Activated CD4-positive, alpha-beta memory T cell treated with anti-CD3 and anti-CD28 coated beads, Interleukin-2, amount 10 ng/mL, durations not matched to agents 7 days and 5 days (primary cell): ENCODE measurements at regions of chr4 and their contacts with region 1.

Region 1: DNA sequence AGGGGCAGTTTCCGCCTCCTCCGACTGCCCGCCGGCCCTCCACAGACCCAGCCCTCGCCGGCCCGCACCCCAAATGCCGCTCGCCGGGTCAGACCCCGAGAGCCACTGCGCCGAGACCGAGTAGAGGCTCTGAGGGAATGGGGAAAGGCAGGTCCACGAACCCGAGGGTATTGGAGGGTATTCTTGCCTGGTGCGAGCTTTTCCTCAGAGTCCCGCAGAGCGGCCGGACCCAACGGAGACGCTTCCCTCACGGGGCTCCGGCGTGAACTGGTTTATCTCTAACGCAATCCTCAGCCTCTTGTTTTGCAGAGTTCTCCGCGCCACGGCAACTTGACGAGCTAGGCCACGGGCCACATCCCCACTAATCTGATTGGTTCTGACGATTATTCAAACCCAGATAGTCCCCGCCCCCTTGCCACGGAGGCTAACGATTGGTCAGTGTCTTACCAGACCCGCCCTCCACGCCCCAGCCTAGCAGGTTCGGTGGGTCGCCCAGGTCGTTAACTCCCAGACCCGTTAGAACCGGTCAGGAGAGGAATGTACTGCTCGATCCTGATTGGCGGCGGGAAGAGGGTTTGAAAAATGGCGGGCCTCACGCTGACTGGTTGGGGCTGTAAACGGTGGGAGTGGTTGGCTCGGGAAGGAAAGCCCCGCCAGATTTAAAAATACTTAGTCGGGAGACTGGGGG is at the start of gene HMGB2:
- DNase-seq: peak; percentile 100
- H3K4me3 Mint-ChIP-seq: peak within 1 kb of the TSS; percentile 94
- H3K27ac Mint-ChIP-seq: peak within 1 kb of the TSS; percentile 98
- H3K4me1 Mint-ChIP-seq: peaks cover 40% of the 10 kb centered on the region
- H3K27me3 Mint-ChIP-seq: no peaks in the 10 kb centered on the region
- total RNA-seq, gene HMGB2: 776 to 794 TPM

Region 2: GRCh38 chr4:173168396-173169177 is 165.6 kb before region 1 on chr4 and contains the start of gene GALNT7:
- CTCF ChIA-PET with region 1: no interaction called
- POLR2A ChIA-PET with region 1: interaction called, 43 read pairs
- DNase-seq: peak; percentile 67
- H3K4me3 Mint-ChIP-seq: peak within 1 kb of the TSS; percentile 94
- H3K27ac Mint-ChIP-seq: peak within 1 kb of the TSS; percentile 84
- H3K4me1 Mint-ChIP-seq: peaks cover 30% of the 10 kb centered on the region
- H3K27me3 Mint-ChIP-seq: no peaks in the 10 kb centered on the region
- total RNA-seq, gene GALNT7: 16.0 to 19.1 TPM

Region 3: DNA sequence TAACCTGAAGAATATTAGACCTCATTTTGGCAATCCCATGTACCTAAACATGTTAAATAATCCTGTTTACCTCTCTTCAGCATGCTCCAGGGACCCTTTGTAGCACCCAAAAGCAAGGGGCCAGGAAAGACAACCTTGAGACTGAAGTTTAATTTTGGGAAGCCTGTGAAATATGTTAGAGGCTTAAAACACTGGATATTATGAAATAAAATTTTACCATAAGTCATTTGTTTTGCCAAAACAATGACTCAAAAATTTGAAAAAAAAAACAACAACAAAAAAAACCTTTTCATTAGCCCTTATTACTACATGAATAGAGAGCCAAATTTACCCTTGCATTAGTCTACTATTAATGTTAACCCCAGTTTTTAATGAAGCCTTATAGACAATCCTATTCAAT is 49.8 kb before region 1 on chr4:
- CTCF ChIA-PET with region 1: no interaction called
- POLR2A ChIA-PET with region 1: no interaction called
- DNase-seq: no peak
- H3K4me3 Mint-ChIP-seq: no peak overlapping the region
- H3K27ac Mint-ChIP-seq: no peak overlapping the region
- H3K4me1 Mint-ChIP-seq: peaks cover 13% of the 10 kb centered on the region
- H3K27me3 Mint-ChIP-seq: no peaks in the 10 kb centered on the region

Region 4: DNA sequence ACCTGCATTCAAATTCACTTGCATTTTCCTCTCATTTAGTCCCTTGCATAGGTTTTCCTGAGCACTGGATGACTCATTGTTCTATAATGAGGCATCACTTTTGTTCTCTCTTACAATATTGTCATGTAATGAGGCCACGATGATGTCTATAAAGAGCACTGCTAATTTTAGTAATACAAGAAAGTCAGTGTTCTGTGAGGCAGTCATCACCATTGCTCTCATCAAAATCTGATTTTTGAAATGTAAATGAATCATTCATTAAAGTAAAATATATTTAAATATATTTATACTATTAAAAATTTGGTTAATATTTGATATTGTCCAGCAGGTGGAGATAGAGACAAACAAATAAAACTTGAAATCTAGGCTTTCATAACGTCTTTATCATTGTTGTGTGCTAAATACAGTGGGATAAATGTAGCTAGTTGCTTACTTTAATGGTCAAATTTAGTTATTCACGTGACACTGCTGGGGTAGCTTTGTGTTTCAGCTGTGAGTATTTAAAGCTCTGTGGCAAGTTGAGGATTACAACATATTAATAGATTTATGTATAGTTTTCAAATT is 15.5 kb before region 1 on chr4:
- CTCF ChIA-PET with region 1: interaction called, 5 read pairs
- POLR2A ChIA-PET with region 1: interaction called, 70 read pairs
- DNase-seq: no peak
- H3K4me3 Mint-ChIP-seq: no peak overlapping the region
- H3K27ac Mint-ChIP-seq: no peak overlapping the region
- H3K4me1 Mint-ChIP-seq: peaks cover 8% of the 10 kb centered on the region
- H3K27me3 Mint-ChIP-seq: no peaks in the 10 kb centered on the region

Region 5: GRCh38 chr4:173346074-173346473 is 11.8 kb after region 1 on chr4:
- CTCF ChIA-PET with region 1: interaction called, 12 read pairs
- POLR2A ChIA-PET with region 1: interaction called, 46 read pairs
- DNase-seq: no peak
- H3K4me3 Mint-ChIP-seq: no peak overlapping the region
- H3K27ac Mint-ChIP-seq: no peak overlapping the region
- H3K4me1 Mint-ChIP-seq: no peaks in the 10 kb centered on the region
- H3K27me3 Mint-ChIP-seq: peaks cover 16% of the 10 kb centered on the region

Region 6: GRCh38 chr4:173360587-173361221 is 26.5 kb after region 1 on chr4:
- CTCF ChIA-PET with region 1: no interaction called
- POLR2A ChIA-PET with region 1: interaction called, 28 read pairs
- DNase-seq: no peak
- H3K4me3 Mint-ChIP-seq: no peak overlapping the region
- H3K27ac Mint-ChIP-seq: no peak overlapping the region
- H3K4me1 Mint-ChIP-seq: peaks cover 11% of the 10 kb centered on the region
- H3K27me3 Mint-ChIP-seq: peaks cover 3% of the 10 kb centered on the region

Region 7: DNA sequence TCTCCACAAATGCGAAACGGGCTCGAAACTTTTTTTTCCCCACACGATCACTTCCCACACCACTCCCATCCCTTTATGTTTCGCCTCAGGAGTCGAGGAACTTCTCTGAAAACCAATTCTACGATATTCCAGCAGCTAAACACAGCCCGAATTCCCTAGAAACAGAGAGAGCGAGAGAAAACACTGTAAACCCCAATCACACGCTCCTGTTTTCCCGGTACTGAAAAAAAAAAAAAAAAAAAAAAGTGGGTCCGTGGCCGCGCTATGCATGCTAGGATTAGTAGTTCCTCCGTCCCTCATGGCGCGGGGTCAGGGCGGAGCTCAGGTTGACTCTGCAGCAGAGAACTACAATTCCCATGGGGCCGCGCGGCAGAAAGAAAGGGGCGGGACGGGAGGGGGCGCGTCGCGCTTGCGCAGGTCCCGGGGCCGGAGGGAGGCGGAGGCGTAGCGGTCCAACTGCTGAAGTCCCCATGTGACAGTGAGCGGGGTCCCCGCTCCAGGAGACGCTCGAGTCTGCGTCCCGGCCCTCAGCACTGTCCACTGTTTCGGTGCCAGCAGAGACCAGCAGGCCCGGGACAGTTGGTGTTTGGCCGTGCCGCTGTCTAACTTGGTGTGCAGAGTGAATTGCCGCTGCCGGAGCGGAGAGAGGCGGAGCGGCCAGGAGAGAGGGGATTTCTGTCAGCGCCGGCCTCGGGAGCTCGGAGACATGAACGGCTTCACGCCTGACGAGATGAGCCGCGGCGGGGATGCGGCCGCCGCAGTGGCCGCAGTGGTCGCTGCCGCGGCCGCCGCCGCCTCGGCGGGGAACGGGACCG is 36.5 kb after region 1 on chr4 and contains the start of gene SAP30:
- CTCF ChIA-PET with region 1: interaction called, 90 read pairs
- POLR2A ChIA-PET with region 1: interaction called, 710 read pairs
- DNase-seq: peak; percentile 97
- H3K4me3 Mint-ChIP-seq: peak within 1 kb of the TSS; percentile 100
- H3K27ac Mint-ChIP-seq: peak within 1 kb of the TSS; percentile 97
- H3K4me1 Mint-ChIP-seq: peaks cover 52% of the 10 kb centered on the region
- H3K27me3 Mint-ChIP-seq: no peaks in the 10 kb centered on the region
- total RNA-seq, gene SAP30: 27.5 to 29.7 TPM

Region 8: DNA sequence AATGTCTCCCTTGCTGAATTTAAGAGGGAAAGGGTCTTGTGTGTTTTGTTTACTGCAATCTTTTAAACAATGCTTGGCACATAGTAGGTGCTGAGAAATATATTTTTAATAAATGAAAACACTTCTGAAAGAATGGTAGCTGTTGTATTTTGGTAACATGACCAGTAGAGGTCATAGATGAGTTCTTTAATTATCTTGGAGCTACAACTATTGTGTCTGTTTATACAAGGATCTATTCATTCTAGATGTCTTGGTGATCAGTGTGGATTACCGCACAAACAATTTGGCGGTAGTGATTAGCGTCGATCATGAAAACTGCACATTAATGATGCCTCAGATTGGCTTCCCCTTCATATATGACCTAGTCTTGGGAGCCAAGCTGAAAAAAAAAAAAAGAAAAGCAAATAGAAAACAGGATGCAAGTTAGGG is 86.1 kb after region 1 on chr4:
- CTCF ChIA-PET with region 1: interaction called, 14 read pairs
- POLR2A ChIA-PET with region 1: interaction called, 20 read pairs
- DNase-seq: no peak
- H3K4me3 Mint-ChIP-seq: no peak overlapping the region
- H3K27ac Mint-ChIP-seq: no peak overlapping the region
- H3K4me1 Mint-ChIP-seq: peaks cover 11% of the 10 kb centered on the region
- H3K27me3 Mint-ChIP-seq: no peaks in the 10 kb centered on the region